ENCODE measurements at regions of chr9 and their contacts with region 1.

Region 1: DNA sequence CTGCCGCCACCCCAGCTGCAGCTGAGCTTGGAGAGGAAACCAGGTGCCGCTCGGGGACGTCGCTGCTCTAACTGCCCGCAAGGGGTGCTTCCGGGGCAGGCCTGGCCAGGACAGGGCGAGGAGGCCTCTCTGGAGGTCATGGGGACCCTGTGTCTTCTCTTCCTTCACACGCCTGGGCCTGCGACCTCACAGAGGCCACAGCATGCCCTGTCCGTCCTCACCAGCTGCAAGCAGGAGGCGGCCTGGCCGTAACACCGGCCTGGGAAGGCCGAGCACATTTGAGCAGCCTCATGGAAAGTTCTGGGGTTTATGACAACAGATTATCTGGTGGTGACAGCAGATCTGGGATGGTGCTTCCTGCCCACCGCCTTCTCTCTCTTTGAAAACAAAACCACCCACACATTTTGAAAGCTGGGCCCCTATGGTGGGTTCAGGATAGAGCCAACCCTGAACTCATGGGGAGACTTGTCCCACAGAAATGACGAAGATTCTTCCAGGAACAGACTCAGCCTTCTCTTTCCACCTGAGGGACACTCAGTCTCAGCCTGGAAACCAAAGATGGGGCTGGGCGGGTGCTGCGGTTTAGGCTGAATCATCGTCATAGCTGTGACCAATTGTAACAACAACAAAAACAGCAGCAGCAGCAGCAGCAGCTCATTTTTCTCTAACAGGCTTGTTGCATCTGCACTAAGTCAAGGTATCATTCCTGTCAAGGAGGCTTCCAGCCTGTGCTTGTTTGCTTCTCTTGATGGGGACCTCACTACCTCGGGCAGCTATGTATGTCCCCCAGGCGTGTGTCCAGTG is 99.6 kb upstream of the RAPGEF1 start:
- DNase-seq: peak; percentile 72
- H3K4me3 Mint-ChIP-seq: peak overlapping the region; percentile 15
- H3K27ac Mint-ChIP-seq: peak overlapping the region; percentile 96
- H3K4me1 Mint-ChIP-seq: peaks cover 15% of the 10 kb centered on the region
- H3K27me3 Mint-ChIP-seq: peaks cover 5% of the 10 kb centered on the region

Region 2: DNA sequence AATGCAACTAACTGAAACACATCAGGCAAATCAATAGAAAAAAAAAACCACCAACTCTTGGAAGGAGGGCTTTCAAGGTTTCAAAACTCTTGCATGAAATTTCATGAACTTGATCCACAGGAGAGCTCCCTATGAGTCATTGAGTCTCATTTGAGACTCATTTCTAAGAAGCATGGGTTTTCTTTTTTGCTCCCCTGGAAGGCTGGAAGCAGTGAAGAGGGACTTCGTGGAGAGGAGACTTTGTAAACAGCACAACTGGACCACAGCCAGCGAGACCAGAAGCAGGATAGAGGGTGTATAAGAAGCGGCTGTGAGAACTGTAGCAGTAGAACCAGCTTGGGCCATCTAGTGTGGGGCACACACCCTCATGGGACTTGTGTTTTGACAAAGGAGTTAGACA is 58.4 kb before region 1 on chr9:
- intact Hi-C with region 1: loop called (anchors 2 kb)
- DNase-seq: no peak
- H3K4me3 Mint-ChIP-seq: no peak overlapping the region
- H3K27ac Mint-ChIP-seq: peak overlapping the region; percentile 69
- H3K4me1 Mint-ChIP-seq: peaks cover 6% of the 10 kb centered on the region
- H3K27me3 Mint-ChIP-seq: peaks cover 12% of the 10 kb centered on the region

Region 3: DNA sequence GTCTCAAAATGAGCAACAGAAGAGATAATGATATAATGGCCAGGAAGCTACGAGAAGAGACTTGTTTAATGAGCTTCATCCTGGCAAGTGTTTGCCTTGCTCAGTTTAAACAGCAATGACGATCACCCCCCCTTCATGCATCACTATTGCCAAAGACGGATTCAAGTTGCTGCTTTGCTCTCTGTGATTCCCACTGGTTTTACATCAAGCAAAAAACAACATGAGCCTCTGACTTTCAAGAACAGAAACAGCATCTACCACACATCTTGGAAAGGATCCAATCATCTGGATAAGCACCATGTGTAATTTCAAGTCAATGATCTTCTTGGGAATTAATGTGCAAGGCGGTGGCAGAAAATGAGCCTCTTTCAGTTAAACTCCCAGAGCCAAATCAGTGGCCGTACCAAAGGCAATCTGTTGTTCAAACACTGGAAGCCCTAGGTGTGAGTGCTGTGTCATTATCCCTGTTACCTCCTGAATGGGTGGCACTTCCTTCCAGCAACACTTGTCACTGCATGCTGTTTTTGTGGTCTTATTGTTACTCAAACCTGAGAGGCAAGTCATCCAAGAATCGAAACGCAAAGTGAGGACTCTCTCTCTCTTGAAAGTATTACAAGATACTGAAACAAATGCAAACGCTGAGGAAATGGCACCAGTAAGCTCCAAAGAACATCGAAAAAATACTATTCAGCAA is 167.3 kb after region 1 on chr9:
- intact Hi-C with region 1: loop called (anchors 10 kb)
- DNase-seq: peak; percentile 33
- H3K4me3 Mint-ChIP-seq: no peak overlapping the region
- H3K27ac Mint-ChIP-seq: no peak overlapping the region
- H3K4me1 Mint-ChIP-seq: peaks cover 36% of the 10 kb centered on the region
- H3K27me3 Mint-ChIP-seq: no peaks in the 10 kb centered on the region

Region 4: DNA sequence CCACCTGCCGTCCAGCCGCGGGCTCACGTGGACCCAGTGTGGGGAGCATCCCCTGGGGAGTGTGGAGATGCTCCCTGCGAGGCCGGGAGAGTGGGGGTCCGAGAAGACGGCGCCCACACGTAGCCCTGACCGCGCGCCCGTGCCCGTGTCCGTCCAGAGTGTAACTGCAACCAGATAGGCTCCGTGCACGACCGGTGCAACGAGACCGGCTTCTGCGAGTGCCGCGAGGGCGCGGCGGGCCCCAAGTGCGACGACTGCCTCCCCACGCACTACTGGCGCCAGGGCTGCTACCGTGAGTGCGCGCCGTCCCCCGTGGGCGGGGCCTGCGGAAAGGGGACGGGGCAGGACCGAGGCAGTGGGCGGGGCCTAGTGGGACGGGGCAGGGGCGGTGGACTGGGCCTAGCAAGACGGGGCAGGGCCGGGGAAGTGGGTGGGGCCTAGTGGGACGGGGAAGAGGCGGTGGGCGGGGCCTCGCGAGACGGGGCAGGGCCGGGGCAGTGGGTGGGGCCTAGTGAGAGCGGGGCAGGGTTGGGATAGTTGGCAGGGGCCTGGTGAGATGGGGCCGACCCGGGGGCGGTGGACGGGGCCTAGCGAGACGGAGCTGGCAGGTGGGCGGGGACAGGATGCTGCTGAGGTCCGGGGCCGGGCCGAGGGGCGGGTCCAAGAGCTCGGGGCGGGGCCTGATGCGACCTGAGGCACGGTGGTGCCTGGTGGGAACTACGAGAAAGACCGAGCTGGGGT is 401.4 kb after region 1 on chr9:
- intact Hi-C with region 1: loop called (anchors 10 kb)
- DNase-seq: peak; percentile 98
- H3K4me3 Mint-ChIP-seq: peak overlapping the region; percentile 92
- H3K27ac Mint-ChIP-seq: peak overlapping the region; percentile 75
- H3K4me1 Mint-ChIP-seq: peaks cover 6% of the 10 kb centered on the region
- H3K27me3 Mint-ChIP-seq: peaks cover 30% of the 10 kb centered on the region